ENCODE measurements at regions of chr3 and their contacts with region 1.

Region 1: GRCh38 chr3:157130467-157131251 is 29.3 kb downstream of the CCNL1 start:
- DNase-seq: peak; percentile 44 to 93 (median 85)
- ATAC-seq: peak; percentile 69
- H3K4me3 ChIP-seq: peak overlapping the region; percentile 14 to 24
- H3K4me3 Mint-ChIP-seq: peak overlapping the region; percentile 72
- H3K27ac ChIP-seq: peak overlapping the region; percentile 71 to 90
- H3K27ac Mint-ChIP-seq: peak overlapping the region; percentile 99
- H3K4me1 ChIP-seq: peaks cover 50% of the 10 kb centered on the region
- H3K4me1 Mint-ChIP-seq: peaks cover 71% of the 10 kb centered on the region
- H3K27me3 ChIP-seq: no peaks in the 10 kb centered on the region
- H3K27me3 Mint-ChIP-seq: no peaks in the 10 kb centered on the region
- CTCF ChIP-seq: peak; percentile 84

Region 2: DNA sequence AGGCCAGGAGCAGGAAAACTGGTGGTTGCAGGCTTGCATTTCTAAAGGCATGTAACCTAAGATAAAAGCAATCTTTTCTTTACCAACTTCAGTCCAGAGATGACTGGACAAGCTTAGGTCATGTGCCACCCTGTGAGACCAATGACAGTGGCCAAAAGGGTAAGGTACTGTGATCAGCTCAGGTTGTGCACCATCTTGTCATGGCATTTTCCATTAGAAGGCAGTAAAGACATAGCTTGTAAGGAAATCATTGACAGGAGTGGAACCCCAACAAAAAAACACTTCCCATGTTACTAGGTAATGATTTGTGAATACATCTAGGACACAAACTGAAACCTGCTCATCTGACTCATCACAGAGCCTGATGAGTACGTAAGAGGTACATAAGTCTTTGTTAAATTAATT is 610.9 kb before region 1 on chr3:
- CTCF ChIA-PET with region 1: no interaction called
- POLR2A ChIA-PET with region 1: no interaction called
- intact Hi-C with region 1: loop called (anchors 2 kb)
- DNase-seq: no peak
- ATAC-seq: no peak
- H3K4me3 ChIP-seq: no peak overlapping the region
- H3K4me3 Mint-ChIP-seq: no peak overlapping the region
- H3K27ac ChIP-seq: no peak overlapping the region
- H3K27ac Mint-ChIP-seq: no peak overlapping the region
- H3K4me1 ChIP-seq: peaks cover 2% of the 10 kb centered on the region
- H3K4me1 Mint-ChIP-seq: peaks cover 4% of the 10 kb centered on the region
- H3K27me3 ChIP-seq: no peaks in the 10 kb centered on the region
- H3K27me3 Mint-ChIP-seq: peaks cover 14% of the 10 kb centered on the region
- CTCF ChIP-seq: no peak

Region 3: DNA sequence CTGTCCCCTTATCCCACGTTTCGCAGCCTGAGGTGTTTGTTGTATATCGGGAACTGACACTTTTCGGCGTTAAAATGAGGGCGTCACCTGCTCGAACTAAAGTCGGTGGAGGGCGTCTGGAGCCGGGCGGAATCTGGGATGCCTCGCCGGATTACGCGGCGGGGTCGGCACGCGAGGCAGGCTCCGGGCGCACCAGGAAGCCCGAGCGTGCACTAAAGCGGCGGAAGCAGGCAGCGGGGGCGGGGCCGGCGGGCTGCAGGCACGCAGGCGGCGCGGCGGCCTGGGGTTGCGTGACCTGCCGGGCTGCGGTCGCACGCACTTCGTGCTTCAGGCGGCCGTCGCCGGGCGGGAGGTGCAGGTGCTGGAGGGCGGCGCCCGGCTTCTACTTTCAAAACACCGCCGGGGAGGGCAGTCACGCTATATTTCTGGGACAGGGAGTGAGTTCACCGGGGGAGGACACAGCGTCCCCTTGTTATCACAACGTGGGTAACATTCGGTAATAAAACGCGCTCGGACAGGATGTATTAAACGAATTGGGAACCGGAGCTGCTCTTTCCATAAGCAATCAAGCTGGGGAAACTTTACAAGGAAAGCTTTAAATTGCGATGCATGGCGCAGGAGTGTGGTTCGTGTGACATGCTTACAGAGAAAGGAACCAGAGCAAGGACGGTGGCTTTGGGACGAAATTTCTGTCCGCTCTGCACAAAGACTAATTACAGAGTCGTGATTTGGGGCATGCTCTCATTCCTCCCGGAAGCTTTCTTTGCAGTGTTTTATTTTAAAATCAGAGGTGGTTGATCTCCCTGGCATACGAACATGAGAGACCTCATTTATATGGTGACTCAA is 313.6 kb before region 1 on chr3:
- CTCF ChIA-PET with region 1: no interaction called
- POLR2A ChIA-PET with region 1: no interaction called
- intact Hi-C with region 1: loop called (anchors 1 to 5 kb)
- DNase-seq: peak; percentile 53 to 95 (median 85)
- ATAC-seq: peak; percentile 80
- H3K4me3 ChIP-seq: peak overlapping the region; percentile 75 to 88
- H3K4me3 Mint-ChIP-seq: peak overlapping the region; percentile 95
- H3K27ac ChIP-seq: peak overlapping the region; percentile 73 to 78
- H3K27ac Mint-ChIP-seq: peak overlapping the region; percentile 95
- H3K4me1 ChIP-seq: peaks cover 18% of the 10 kb centered on the region
- H3K4me1 Mint-ChIP-seq: peaks cover 38% of the 10 kb centered on the region
- H3K27me3 ChIP-seq: no peaks in the 10 kb centered on the region
- H3K27me3 Mint-ChIP-seq: no peaks in the 10 kb centered on the region
- CTCF ChIP-seq: no peak

Region 4: GRCh38 chr3:156892701-156893100 is 238.0 kb before region 1 on chr3:
- CTCF ChIA-PET with region 1: no interaction called
- POLR2A ChIA-PET with region 1: no interaction called
- intact Hi-C with region 1: no loop called
- DNase-seq: no peak
- ATAC-seq: no peak
- H3K4me3 ChIP-seq: no peak overlapping the region
- H3K4me3 Mint-ChIP-seq: no peak overlapping the region
- H3K27ac ChIP-seq: no peak overlapping the region
- H3K27ac Mint-ChIP-seq: no peak overlapping the region
- H3K4me1 ChIP-seq: no peaks in the 10 kb centered on the region
- H3K4me1 Mint-ChIP-seq: no peaks in the 10 kb centered on the region
- H3K27me3 ChIP-seq: no peaks in the 10 kb centered on the region
- H3K27me3 Mint-ChIP-seq: no peaks in the 10 kb centered on the region
- CTCF ChIP-seq: no peak

Region 5: DNA sequence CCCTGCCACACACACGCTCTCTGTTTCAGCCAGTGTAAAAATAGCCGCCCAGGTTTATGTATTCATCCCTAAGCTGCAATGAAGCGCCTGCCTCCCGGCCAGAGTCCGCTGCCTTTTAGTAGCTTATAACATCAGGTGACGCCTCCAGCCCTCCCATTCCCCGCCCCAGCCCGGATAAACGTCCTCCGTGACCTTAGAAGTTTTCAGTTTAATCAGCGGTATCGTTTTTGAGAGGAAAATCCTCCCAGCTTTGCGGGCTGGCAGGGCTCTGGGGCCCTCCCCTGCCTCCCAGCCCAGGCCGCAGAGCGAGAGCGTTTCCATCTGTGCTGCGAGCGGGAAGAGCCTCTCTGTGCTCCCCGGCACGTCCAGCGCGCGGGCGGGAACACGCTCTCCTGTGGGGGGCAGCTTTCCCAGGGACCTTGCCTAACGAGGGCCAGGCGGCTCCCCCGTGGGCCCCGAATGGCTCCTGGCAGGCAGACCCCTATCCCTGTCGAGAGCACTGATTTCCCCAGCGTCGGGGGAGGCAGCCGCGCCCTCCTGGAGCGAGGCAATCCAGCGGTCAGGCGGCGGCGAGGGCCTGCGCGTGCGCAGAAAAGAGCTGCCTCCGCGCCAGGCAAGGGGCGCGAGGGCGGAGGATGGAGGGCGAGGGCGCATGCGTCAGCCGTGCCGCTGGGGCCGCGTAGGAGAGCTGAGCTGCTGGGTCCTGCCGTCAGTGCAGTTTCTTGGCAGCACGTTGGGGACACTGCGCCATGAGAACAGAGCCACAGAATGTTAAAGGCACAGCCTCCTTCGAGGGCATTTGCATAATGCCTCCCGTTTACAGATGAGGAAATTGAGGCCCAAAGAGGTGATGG is 41.8 kb before region 1 on chr3:
- CTCF ChIA-PET with region 1: interaction called, 11 read pairs
- POLR2A ChIA-PET with region 1: interaction called, 9 read pairs
- intact Hi-C with region 1: loop called (anchors 1 kb)
- DNase-seq: peak; percentile 87 to 97 (median 93)
- ATAC-seq: peak; percentile 92
- H3K4me3 ChIP-seq: peak overlapping the region; percentile 96 to 98
- H3K4me3 Mint-ChIP-seq: peak overlapping the region; percentile 88
- H3K27ac ChIP-seq: peak overlapping the region; percentile 88 to 95
- H3K27ac Mint-ChIP-seq: peak overlapping the region; percentile 96
- H3K4me1 ChIP-seq: peaks cover 18% of the 10 kb centered on the region
- H3K4me1 Mint-ChIP-seq: peaks cover 26% of the 10 kb centered on the region
- H3K27me3 ChIP-seq: no peaks in the 10 kb centered on the region
- H3K27me3 Mint-ChIP-seq: no peaks in the 10 kb centered on the region
- CTCF ChIP-seq: no peak

Measured in CD8-positive, alpha-beta T cell (primary cell).